Astrocyte of the cerebellum (primary cell): ENCODE measurements at regions of chr6 and their contacts with region 1.

Region 1: GRCh38 chr6:101806241-101806640 is 412.7 kb downstream of the GRIK2 start:
- DNase-seq: peak; percentile 87
- H3K4me3 ChIP-seq: no peak overlapping the region
- CTCF ChIP-seq: no peak

Region 2: GRCh38 chr6:101401792-101402621 is 404.2 kb before region 1 on chr6:
- in situ Hi-C with region 1: loop called (anchors 10 kb)
- DNase-seq: no peak
- H3K4me3 ChIP-seq: peak overlapping the region; percentile 32
- CTCF ChIP-seq: no peak

Region 3: GRCh38 chr6:101878554-101879276 is 72.5 kb after region 1 on chr6:
- in situ Hi-C with region 1: loop called (anchors 5 kb)
- DNase-seq: no peak
- H3K4me3 ChIP-seq: no peak overlapping the region
- CTCF ChIP-seq: no peak

Region 4: GRCh38 chr6:102114402-102114801 is 308.2 kb after region 1 on chr6:
- in situ Hi-C with region 1: no loop called
- DNase-seq: no peak
- H3K4me3 ChIP-seq: no peak overlapping the region
- CTCF ChIP-seq: no peak